GM10248 (cell line): ENCODE measurements at regions of chr12 and their contacts with region 1.

Region 1: DNA sequence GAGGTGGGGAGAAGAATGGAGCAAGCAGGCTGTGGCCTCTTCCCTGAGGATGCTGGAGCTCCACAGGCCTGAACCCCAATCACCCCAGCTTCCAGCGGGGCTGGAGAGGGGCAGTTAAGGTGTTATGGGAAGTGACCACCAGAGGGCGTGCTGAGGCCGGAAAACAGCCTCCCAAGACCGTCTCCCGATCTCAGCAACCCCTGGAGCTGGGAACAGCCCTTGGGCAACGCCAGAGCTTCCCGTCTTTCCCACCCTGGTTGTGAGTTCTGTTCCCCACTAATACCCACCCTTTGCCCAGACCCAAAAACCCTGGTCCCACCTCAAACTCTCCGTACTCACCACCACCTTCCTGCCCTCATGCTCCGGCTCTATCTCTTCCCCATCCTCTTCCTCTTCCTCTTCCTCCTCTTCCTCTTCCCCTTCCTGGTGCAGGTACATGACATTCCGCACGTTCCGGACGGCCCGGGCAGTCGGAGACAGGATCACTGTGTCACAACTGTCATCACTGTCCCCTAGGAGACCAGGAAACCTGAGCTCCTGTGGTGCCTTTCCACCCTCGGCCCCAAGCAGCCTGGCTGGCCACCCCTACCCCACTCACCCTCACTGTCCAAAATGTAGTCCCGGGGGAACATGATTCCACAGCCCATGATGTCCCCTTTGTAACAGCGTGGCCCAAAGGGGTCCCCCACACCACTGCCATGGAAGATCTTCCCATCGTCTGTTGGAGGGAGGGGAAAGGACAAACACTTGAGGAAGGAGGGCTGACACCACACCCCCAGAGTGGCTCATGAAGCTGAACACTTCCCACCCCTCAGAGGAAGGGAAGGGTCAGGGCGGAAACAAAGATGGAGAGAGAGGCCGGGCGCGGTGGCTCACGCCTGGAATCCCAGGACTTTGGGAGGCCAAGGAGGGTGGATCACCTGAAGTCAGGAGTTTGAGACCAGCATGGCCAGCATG is 12.9 kb downstream of the SPRYD3 start:
- DNase-seq: peak; percentile 86
- CTCF ChIP-seq: peak; percentile 90

Region 2: DNA sequence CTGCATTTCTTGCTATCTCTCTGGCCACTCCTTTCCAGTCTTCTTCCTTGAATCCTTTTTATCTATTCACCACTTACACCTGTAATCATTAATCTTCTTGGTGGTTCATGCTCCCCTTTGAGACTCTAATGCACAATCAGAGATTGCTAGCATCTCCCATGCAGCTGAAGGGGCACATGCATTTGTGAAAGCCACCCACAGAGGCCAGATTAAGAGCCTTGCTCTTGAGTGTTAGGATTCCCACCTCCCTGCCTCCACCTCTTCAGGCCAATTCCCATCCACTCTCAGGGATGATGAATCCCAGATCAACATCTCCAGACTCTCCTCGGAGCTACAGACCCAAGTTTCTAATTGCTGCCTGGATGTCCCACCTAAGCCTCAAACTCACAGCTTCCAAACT is 136.7 kb before region 1 on chr12:
- CTCF ChIA-PET with region 1: no interaction called
- POLR2A ChIA-PET with region 1: no interaction called
- DNase-seq: no peak
- CTCF ChIP-seq: no peak

Region 3: GRCh38 chr12:53054112-53054833 is 12.0 kb before region 1 on chr12:
- CTCF ChIA-PET with region 1: interaction called, 264 read pairs
- POLR2A ChIA-PET with region 1: no interaction called
- DNase-seq: peak; percentile 95
- CTCF ChIP-seq: no peak

Region 4: GRCh38 chr12:53098982-53099651 is 32.9 kb after region 1 on chr12:
- CTCF ChIA-PET with region 1: interaction called, 294 read pairs
- POLR2A ChIA-PET with region 1: no interaction called
- DNase-seq: peak; percentile 86
- CTCF ChIP-seq: peak; percentile 93

Region 5: GRCh38 chr12:53190108-53190729 is 124.0 kb after region 1 on chr12:
- CTCF ChIA-PET with region 1: interaction called, 10 read pairs
- POLR2A ChIA-PET with region 1: interaction called, 3 read pairs
- DNase-seq: peak; percentile 61
- CTCF ChIP-seq: peak; percentile 76

Region 6: GRCh38 chr12:53287741-53288216 is 221.5 kb after region 1 on chr12:
- CTCF ChIA-PET with region 1: interaction called, 10 read pairs
- POLR2A ChIA-PET with region 1: no interaction called
- DNase-seq: peak; percentile 80
- CTCF ChIP-seq: peak; percentile 68